Activated CD8-positive, alpha-beta T cell treated with anti-CD3 and anti-CD28 coated beads for 36 hours (primary cell): ENCODE measurements at regions of chr15 and their contacts with region 1.

Region 1: DNA sequence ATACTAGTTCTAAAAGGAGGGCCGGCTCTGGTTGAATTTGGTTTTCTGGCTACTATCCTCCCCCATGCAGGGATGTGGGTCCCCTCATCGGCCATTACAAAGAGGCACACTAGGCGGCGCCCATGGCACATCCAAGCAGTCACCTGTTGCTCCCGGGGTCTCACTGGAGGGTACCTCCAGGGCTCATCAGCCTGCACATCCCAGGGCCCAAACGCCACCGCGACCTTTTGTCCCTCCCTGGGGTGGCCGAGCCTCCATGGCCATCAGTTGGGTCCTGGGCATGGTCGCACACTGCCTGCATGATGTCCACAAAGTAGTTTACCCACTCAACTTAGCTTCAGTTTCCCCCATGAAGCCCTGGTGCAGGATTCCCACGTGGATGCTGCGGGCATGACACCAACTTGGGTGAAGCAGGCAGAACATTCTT is 28.3 kb downstream of the IDH3A start:
- DNase-seq: peak; percentile 64
- ATAC-seq: peak; percentile 60
- H3K4me3 Mint-ChIP-seq: no peak overlapping the region
- H3K27ac Mint-ChIP-seq: no peak overlapping the region
- H3K4me1 Mint-ChIP-seq: peaks cover 19% of the 10 kb centered on the region
- H3K27me3 Mint-ChIP-seq: no peaks in the 10 kb centered on the region
- CTCF ChIP-seq: peak; percentile 62

Region 2: DNA sequence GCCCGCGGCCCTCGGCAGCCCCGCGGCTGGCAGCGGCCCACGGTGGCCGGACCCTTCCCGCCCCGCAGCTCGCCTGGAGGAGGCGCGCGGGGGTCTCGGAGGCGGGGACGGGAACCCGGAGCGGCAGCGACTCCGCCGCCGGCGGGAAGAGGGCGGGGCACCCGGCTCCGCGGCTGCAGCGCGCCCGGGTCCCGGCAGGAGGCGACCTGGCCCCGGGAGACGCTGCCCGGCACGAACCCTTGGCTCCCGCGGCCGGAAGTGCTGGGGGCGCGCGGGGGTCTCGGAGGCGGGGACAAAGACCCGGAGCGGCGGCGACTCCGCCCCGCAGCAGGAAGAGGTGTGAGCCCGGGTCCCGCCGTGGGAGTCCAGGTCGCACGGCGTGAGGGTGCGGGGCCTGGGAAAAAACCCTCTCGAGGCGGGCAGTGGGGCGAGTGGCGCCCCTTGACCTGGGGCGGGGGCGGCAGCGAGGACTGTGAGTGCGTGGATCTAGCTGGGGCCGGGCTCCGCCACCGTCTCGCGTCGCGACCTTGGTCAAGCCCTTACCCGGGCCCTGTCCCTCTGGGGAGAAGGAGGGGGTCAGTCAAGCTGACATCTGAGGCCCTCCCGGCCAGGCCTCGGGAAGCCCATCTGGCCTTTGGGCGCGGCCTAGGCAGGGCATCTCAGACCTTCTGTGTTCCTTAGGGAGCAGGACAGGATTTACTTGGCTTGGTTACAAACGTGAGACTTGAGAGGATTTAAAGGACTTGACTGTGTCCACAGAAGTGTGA is 46.0 kb before region 1 on chr15 and contains the start of gene CIB2:
- CTCF ChIA-PET with region 1: interaction called, 12 read pairs
- POLR2A ChIA-PET with region 1: no interaction called
- intact Hi-C with region 1: no loop called
- DNase-seq: peak; percentile 78
- ATAC-seq: peak; percentile 94
- H3K4me3 Mint-ChIP-seq: peak within 1 kb of the TSS; percentile 79
- H3K27ac Mint-ChIP-seq: peak within 1 kb of the TSS; percentile 60
- H3K4me1 Mint-ChIP-seq: peaks cover 22% of the 10 kb centered on the region
- H3K27me3 Mint-ChIP-seq: peaks cover 1% of the 10 kb centered on the region
- CTCF ChIP-seq: peak; percentile 89
- total RNA-seq, gene CIB2: 1.6 TPM

Region 3: GRCh38 chr15:78308422-78309032 is 131.1 kb after region 1 on chr15:
- CTCF ChIA-PET with region 1: no interaction called
- POLR2A ChIA-PET with region 1: no interaction called
- intact Hi-C with region 1: no loop called
- DNase-seq: peak; percentile 80
- ATAC-seq: peak; percentile 98
- H3K4me3 Mint-ChIP-seq: no peak overlapping the region
- H3K27ac Mint-ChIP-seq: no peak overlapping the region
- H3K4me1 Mint-ChIP-seq: no peaks in the 10 kb centered on the region
- H3K27me3 Mint-ChIP-seq: peaks cover 5% of the 10 kb centered on the region
- CTCF ChIP-seq: peak; percentile 74